Heart left ventricle (tissue), 16 donors: ENCODE measurements at regions of chr10 and their contacts with region 1.

Region 1: DNA sequence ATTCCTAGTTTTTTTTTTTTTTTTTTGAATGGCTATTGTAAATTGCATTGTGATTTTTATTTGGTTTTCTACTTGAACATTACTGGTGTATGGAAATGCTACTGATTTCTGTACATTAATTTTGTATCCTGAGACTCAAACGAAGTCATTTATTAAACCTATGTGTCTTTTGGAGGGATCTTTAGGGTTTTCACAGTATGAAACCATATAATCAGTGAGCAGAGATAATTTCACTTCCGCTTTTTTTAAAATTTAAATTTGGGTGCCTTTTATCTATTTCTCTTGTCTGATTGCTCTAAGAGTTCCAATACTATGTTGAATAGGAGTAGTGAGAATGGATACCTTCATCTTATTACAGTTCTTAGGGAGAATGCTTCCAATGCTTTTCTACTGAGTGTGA is 102.7 kb downstream of the ZWINT start:
- DNase-seq: no peak
- ATAC-seq: no peak
- H3K4me3 ChIP-seq: no peak overlapping the region
- H3K27ac ChIP-seq: no peak overlapping the region
- H3K4me1 ChIP-seq: no peaks in the 10 kb centered on the region
- H3K27me3 ChIP-seq: no peaks in the 10 kb centered on the region
- CTCF ChIP-seq: no peak
- POLR2A ChIP-seq: no peak

Region 2: DNA sequence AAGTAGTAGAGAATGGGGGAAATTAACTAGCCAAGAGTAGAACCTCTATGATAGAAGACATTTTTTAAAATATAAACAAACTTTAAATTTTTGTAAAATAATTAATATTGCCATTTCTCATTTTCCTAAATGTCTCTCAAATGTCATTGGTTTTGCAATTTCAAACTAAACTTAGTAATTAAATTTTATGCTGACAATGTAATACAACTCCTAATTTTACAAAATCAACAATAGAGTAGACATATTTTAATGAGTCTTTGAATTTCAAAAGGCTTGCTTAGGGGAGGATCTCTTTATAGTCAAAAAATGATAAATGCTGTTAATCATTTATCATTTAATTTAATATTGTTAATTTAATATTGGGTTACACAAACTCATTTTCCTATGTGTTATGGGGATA is 20.9 kb after region 1 on chr10:
- intact Hi-C with region 1: loop called in 1 of 10 experiments (anchors 1 kb)
- DNase-seq: no peak
- ATAC-seq: no peak
- H3K4me3 ChIP-seq: no peak overlapping the region
- H3K27ac ChIP-seq: no peak overlapping the region
- H3K4me1 ChIP-seq: no peaks in the 10 kb centered on the region
- H3K27me3 ChIP-seq: no peaks in the 10 kb centered on the region
- CTCF ChIP-seq: no peak
- POLR2A ChIP-seq: no peak

Region 3: GRCh38 chr10:57053530-57053929 is 795.2 kb after region 1 on chr10:
- intact Hi-C with region 1: loop called in 1 of 10 experiments (anchors 10 kb)
- DNase-seq: no peak
- ATAC-seq: no peak
- H3K4me3 ChIP-seq: no peak overlapping the region
- H3K27ac ChIP-seq: no peak overlapping the region
- H3K4me1 ChIP-seq: no peaks in the 10 kb centered on the region
- H3K27me3 ChIP-seq: no peaks in the 10 kb centered on the region
- CTCF ChIP-seq: no peak
- POLR2A ChIP-seq: no peak